Right lobe of liver (tissue), 6 donors: ENCODE measurements at regions of chr7 and their contacts with region 1.

Region 1: GRCh38 chr7:26291699-26292538 is at the start of gene SNX10:
- DNase-seq: peak; percentile 81 to 84 (median 84)
- ATAC-seq: peak; percentile 79 to 94 (median 90)
- H3K4me3 ChIP-seq: peak within 1 kb of the TSS; percentile 65 to 75 (median 67)
- H3K27ac ChIP-seq: peak within 1 kb of the TSS; percentile 75 to 96 (median 84)
- H3K4me1 ChIP-seq: peaks cover 0 to 8% (median 3%) of the 10 kb centered on the region in 4 donors
- H3K27me3 ChIP-seq: no peaks in the 10 kb centered on the region
- CTCF ChIP-seq: peak; percentile 37 to 58 (median 46)
- POLR2A ChIP-seq: peak; percentile 84
- total RNA-seq, gene SNX10: 10.1 to 59.0 (median 37.7) TPM

Region 2: DNA sequence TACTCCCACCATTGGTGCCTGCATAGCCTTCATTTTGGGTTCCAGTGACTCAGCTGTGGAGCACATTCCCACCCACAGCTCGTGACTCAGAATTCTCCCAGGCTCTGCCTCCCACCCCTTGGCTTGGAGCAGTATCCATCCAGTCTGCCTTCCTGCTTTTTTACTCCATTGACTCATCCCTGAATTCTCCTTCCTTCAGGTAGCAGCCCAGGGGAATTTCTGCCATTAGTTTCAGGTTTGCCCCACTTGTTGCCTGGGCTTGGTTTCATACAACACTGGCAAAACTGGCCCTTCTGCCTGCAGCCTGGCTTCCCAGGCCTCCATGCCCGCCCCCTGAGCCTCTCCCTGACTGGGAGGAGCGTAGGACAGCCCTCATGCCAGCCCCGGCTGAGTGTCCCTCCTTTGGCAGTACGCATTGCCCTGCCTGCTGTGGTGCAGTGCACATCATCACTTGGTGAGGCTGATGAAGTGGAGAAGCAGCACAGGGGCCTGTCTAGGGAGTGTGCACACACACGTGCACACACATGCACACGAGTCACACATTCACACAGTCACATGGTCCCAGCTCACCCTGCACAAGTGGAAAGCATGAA is 54.8 kb after region 1 on chr7:
- intact Hi-C with region 1: loop called in 1 of 2 experiments (anchors 10 kb)
- DNase-seq: peak; percentile 51 to 91 (median 79)
- ATAC-seq: peak; percentile 11 to 69 (median 48)
- H3K4me3 ChIP-seq: no peak overlapping the region
- H3K27ac ChIP-seq: peak overlapping the region; percentile 31 to 87 (median 66)
- H3K4me1 ChIP-seq: peaks cover 0 to 64% (median 29%) of the 10 kb centered on the region in 4 donors
- H3K27me3 ChIP-seq: no peaks in the 10 kb centered on the region
- CTCF ChIP-seq: no peak
- POLR2A ChIP-seq: peak; percentile 40